Testis (tissue), 5 donors: ENCODE measurements at regions of chr17 and their contacts with region 1.

Region 1: GRCh38 chr17:77331301-77331864 is 190.6 kb downstream of the SEC14L1 start:
- DNase-seq: peak; percentile 96
- H3K4me3 ChIP-seq: no peak overlapping the region
- H3K27ac ChIP-seq: no peak overlapping the region
- H3K4me1 ChIP-seq: peaks cover 7% of the 10 kb centered on the region
- H3K27me3 ChIP-seq: no peaks in the 10 kb centered on the region
- CTCF ChIP-seq: peak; percentile 93 to 96 (median 95)
- POLR2A ChIP-seq: no peak

Region 2: DNA sequence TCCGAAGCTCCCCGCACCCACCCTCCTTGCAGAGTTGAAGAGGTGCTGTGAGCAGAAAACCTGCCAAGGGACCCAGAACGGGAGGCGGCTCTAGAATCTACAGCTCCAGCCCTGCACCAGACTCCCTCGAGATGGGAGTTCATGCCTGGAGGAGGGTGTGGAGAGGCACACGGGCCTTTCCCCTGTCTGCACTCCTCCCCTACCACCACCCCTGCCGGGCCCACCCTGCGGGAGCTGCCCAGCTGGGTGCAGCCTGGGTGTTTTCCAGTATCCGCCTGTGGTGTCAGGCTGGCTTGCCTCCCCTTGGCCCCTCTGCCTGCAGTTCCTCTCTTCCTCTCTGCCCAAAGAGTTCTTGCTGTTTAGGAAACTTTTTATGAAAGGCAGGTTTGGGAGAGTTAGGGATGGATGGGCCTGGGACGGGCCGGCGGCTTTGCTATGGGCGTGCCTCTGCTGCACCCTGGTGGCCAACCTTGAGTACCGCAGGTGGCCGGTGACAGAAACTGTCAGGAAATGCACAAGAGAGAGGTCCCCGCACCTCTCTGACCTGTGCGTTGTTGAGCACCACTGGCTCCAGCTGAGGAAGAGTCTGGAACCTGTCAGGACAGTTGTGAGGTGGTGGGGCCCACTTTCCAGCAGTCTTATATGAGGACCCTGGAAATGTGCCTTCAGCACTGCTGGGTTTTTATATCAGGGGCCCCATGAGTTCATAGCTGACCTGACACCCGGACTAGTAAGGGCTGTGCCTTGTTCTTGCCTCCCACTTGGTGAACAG is 163.5 kb after region 1 on chr17:
- intact Hi-C with region 1: loop called (anchors 2 kb)
- DNase-seq: peak; percentile 90
- H3K4me3 ChIP-seq: no peak overlapping the region
- H3K27ac ChIP-seq: no peak overlapping the region
- H3K4me1 ChIP-seq: peaks cover 8% of the 10 kb centered on the region
- H3K27me3 ChIP-seq: no peaks in the 10 kb centered on the region
- CTCF ChIP-seq: peak; percentile 99
- POLR2A ChIP-seq: no peak